B cell (primary cell): ENCODE measurements at regions of chr20 and their contacts with region 1.

Region 1: GRCh38 chr20:59207742-59208357 is 44.2 kb downstream of the ZNF831 start:
- DNase-seq: peak; percentile 85
- ATAC-seq: peak; percentile 99
- H3K4me3 ChIP-seq: no peak overlapping the region
- H3K4me3 Mint-ChIP-seq: no peak overlapping the region
- H3K27ac ChIP-seq: no peak overlapping the region
- H3K27ac Mint-ChIP-seq: no peak overlapping the region
- H3K4me1 ChIP-seq: peaks cover 6 to 7% of the 10 kb centered on the region in 2 donors
- H3K4me1 Mint-ChIP-seq: peaks cover 7% of the 10 kb centered on the region
- H3K27me3 ChIP-seq: no peaks in the 10 kb centered on the region
- H3K27me3 Mint-ChIP-seq: no peaks in the 10 kb centered on the region
- CTCF ChIP-seq: peak; percentile 91

Region 2: GRCh38 chr20:58870239-58871014 is 337.4 kb before region 1 on chr20:
- CTCF ChIA-PET with region 1: interaction called, 58 read pairs
- POLR2A ChIA-PET with region 1: no interaction called
- intact Hi-C with region 1: loop called (anchors 1 kb)
- DNase-seq: peak; percentile 69
- ATAC-seq: peak; percentile 78
- H3K4me3 ChIP-seq: no peak overlapping the region
- H3K4me3 Mint-ChIP-seq: no peak overlapping the region
- H3K27ac ChIP-seq: no peak overlapping the region
- H3K27ac Mint-ChIP-seq: no peak overlapping the region
- H3K4me1 ChIP-seq: peaks cover 5 to 9% of the 10 kb centered on the region in 2 donors
- H3K4me1 Mint-ChIP-seq: peaks cover 12% of the 10 kb centered on the region
- H3K27me3 ChIP-seq: peaks cover 0 to 4% (median 1%) of the 10 kb centered on the region in 4 experiments
- H3K27me3 Mint-ChIP-seq: peaks cover 8% of the 10 kb centered on the region
- CTCF ChIP-seq: peak; percentile 78

Region 3: GRCh38 chr20:59055295-59055694 is 152.6 kb before region 1 on chr20:
- CTCF ChIA-PET with region 1: interaction called, 11 read pairs
- POLR2A ChIA-PET with region 1: no interaction called
- intact Hi-C with region 1: no loop called
- DNase-seq: peak; percentile 59
- ATAC-seq: peak; percentile 28
- H3K4me3 ChIP-seq: no peak overlapping the region
- H3K4me3 Mint-ChIP-seq: no peak overlapping the region
- H3K27ac ChIP-seq: no peak overlapping the region
- H3K27ac Mint-ChIP-seq: no peak overlapping the region
- H3K4me1 ChIP-seq: no peaks in the 10 kb centered on the region
- H3K4me1 Mint-ChIP-seq: no peaks in the 10 kb centered on the region
- H3K27me3 ChIP-seq: peaks cover 0 to 17% (median 9%) of the 10 kb centered on the region in 4 experiments
- H3K27me3 Mint-ChIP-seq: peaks cover 38% of the 10 kb centered on the region
- CTCF ChIP-seq: peak; percentile 67

Region 4: GRCh38 chr20:59102841-59103299 is 105.0 kb before region 1 on chr20:
- CTCF ChIA-PET with region 1: interaction called, 13 read pairs
- POLR2A ChIA-PET with region 1: no interaction called
- intact Hi-C with region 1: no loop called
- DNase-seq: no peak
- ATAC-seq: no peak
- H3K4me3 ChIP-seq: no peak overlapping the region
- H3K4me3 Mint-ChIP-seq: no peak overlapping the region
- H3K27ac ChIP-seq: no peak overlapping the region
- H3K27ac Mint-ChIP-seq: no peak overlapping the region
- H3K4me1 ChIP-seq: peaks cover 3 to 7% of the 10 kb centered on the region in 2 donors
- H3K4me1 Mint-ChIP-seq: peaks cover 10% of the 10 kb centered on the region
- H3K27me3 ChIP-seq: no peaks in the 10 kb centered on the region
- H3K27me3 Mint-ChIP-seq: peaks cover 8% of the 10 kb centered on the region
- CTCF ChIP-seq: no peak

Region 5: DNA sequence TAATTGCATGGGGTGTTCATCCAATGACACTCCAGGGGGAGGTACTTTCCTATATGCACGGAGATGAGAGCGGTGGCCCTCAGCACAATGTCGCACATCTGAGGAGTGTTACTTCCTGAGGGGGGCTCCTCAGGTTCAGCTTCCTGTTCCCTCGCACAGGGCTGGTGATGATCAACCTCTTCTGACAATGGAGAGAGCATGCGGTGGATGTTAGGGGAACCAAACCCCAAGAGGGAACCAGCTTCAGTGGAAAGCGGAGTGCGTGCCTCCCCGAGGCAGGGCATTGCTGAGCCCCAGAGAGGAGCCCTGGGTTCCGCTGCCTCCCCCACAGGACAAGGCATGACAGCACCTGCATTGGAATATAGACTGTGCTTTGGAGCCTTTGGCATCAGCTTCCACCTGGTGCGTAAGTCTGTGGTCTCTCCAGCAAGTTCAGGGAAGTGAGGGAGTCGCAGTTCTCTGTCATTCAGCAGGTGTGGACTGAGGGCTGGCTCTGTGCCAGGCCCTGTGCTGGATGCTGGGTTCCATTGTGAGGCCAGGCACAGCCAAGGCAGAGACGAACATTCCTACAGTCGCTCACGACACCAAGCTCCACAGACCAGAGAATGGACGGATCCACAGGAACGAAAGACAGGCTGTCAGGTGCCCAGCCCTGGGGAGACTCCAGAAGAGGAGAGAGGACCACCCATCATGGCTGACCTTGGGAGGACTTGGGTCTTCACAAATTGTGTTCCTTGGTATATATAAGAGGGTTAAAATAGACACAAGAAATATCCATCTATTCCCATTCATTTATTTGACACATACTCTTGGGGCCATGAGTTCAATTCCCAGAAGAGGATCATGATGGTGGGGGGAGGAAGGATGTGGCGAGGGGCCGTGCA is 48.1 kb before region 1 on chr20:
- CTCF ChIA-PET with region 1: interaction called, 14 read pairs
- POLR2A ChIA-PET with region 1: no interaction called
- intact Hi-C with region 1: loop called (anchors 5 kb)
- DNase-seq: peak; percentile 57
- ATAC-seq: peak; percentile 34
- H3K4me3 ChIP-seq: peak overlapping the region in 2 of 5 experiments; percentile 19 to 30
- H3K4me3 Mint-ChIP-seq: peak overlapping the region; percentile 66
- H3K27ac ChIP-seq: no peak overlapping the region
- H3K27ac Mint-ChIP-seq: peak overlapping the region; percentile 59
- H3K4me1 ChIP-seq: peaks cover 51 to 53% of the 10 kb centered on the region in 2 donors
- H3K4me1 Mint-ChIP-seq: peaks cover 58% of the 10 kb centered on the region
- H3K27me3 ChIP-seq: no peaks in the 10 kb centered on the region
- H3K27me3 Mint-ChIP-seq: peaks cover 3% of the 10 kb centered on the region
- CTCF ChIP-seq: no peak

Region 6: DNA sequence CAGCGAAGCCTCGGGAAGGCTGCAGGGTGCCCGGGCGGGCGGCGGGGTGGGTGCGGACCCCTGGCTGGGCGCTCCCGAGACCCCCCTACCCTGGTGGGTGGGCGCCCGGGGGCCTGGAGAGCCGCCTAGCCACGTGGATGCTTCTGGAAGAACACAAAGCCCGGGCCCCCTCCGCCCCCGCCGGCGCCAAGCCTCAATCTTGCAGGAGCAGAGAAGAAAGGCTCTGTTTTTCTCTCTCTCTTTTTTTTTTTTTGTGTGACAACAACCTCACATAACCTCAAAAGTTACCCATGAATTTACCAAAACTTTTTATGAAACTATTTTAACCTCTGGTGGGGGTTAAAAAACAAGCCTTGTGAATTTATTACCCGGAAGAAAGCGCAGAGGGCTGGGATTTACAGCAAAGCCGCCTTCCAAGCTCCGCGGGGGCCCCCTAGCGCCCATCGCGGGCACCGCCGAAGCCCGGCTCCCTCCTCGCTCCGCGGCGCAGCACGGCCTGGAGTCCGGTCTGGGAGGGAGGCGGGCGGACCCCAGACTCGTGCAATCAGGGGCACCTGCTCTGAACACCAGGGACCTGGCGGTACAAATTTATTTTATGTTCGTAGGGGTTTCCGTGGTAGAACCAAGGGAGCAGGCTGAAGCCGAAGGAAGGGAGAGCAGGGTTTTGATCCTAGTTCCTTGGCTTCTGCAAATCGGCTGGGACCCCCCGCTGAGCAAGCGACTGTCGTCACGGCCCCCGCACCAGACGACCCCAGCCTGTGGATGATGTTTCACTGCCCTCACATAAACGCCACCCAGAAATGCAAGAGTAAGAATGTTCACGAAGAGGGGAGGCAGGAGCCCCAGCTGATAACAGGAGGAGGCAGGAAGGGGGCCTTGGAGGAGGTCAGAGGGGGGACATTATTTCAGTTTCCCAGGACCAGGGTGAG is 14.7 kb after region 1 on chr20:
- CTCF ChIA-PET with region 1: interaction called, 56 read pairs
- POLR2A ChIA-PET with region 1: no interaction called
- intact Hi-C with region 1: no loop called
- DNase-seq: peak; percentile 83
- ATAC-seq: peak; percentile 97
- H3K4me3 ChIP-seq: peak overlapping the region; percentile 46 to 93 (median 54)
- H3K4me3 Mint-ChIP-seq: peak overlapping the region; percentile 88
- H3K27ac ChIP-seq: peak overlapping the region in 1 of 2 donors; percentile 60
- H3K27ac Mint-ChIP-seq: peak overlapping the region; percentile 60
- H3K4me1 ChIP-seq: peaks cover 12 to 15% of the 10 kb centered on the region in 2 donors
- H3K4me1 Mint-ChIP-seq: peaks cover 10% of the 10 kb centered on the region
- H3K27me3 ChIP-seq: peaks cover 0 to 18% (median 6%) of the 10 kb centered on the region in 4 experiments
- H3K27me3 Mint-ChIP-seq: peaks cover 16% of the 10 kb centered on the region
- CTCF ChIP-seq: peak; percentile 97

Region 7: DNA sequence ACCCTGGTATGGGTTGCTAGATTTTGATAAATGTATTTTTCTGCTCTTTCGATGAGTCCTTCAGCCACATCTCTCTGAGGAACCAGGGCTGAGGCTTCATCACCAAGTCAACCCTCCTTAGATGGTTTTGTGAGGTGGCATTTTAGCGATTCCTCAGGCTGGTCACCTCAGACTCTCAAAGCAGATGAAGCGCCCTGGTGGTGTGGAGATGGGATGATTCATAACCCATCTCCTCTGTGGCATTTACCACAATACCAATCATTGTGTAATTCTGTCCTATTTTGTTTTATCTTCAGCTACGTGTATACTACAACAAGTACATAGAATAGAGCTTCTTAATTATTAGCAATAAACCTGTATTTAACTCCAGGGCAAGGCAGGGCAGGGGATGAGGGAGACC is 34.9 kb after region 1 on chr20:
- CTCF ChIA-PET with region 1: no interaction called
- POLR2A ChIA-PET with region 1: no interaction called
- intact Hi-C with region 1: no loop called
- DNase-seq: no peak
- ATAC-seq: no peak
- H3K4me3 ChIP-seq: no peak overlapping the region
- H3K4me3 Mint-ChIP-seq: no peak overlapping the region
- H3K27ac ChIP-seq: no peak overlapping the region
- H3K27ac Mint-ChIP-seq: no peak overlapping the region
- H3K4me1 ChIP-seq: no peaks in the 10 kb centered on the region
- H3K4me1 Mint-ChIP-seq: no peaks in the 10 kb centered on the region
- H3K27me3 ChIP-seq: no peaks in the 10 kb centered on the region
- H3K27me3 Mint-ChIP-seq: no peaks in the 10 kb centered on the region
- CTCF ChIP-seq: no peak

Region 8: GRCh38 chr20:59322899-59323454 is 115.1 kb after region 1 on chr20:
- CTCF ChIA-PET with region 1: no interaction called
- POLR2A ChIA-PET with region 1: no interaction called
- intact Hi-C with region 1: no loop called
- DNase-seq: no peak
- ATAC-seq: no peak
- H3K4me3 ChIP-seq: no peak overlapping the region
- H3K4me3 Mint-ChIP-seq: no peak overlapping the region
- H3K27ac ChIP-seq: no peak overlapping the region
- H3K27ac Mint-ChIP-seq: no peak overlapping the region
- H3K4me1 ChIP-seq: no peaks in the 10 kb centered on the region
- H3K4me1 Mint-ChIP-seq: no peaks in the 10 kb centered on the region
- H3K27me3 ChIP-seq: no peaks in the 10 kb centered on the region
- H3K27me3 Mint-ChIP-seq: peaks cover 6% of the 10 kb centered on the region
- CTCF ChIP-seq: no peak